GM12878 (cell line): ENCODE measurements at regions of chr1 and their contacts with region 1.

Region 1: DNA sequence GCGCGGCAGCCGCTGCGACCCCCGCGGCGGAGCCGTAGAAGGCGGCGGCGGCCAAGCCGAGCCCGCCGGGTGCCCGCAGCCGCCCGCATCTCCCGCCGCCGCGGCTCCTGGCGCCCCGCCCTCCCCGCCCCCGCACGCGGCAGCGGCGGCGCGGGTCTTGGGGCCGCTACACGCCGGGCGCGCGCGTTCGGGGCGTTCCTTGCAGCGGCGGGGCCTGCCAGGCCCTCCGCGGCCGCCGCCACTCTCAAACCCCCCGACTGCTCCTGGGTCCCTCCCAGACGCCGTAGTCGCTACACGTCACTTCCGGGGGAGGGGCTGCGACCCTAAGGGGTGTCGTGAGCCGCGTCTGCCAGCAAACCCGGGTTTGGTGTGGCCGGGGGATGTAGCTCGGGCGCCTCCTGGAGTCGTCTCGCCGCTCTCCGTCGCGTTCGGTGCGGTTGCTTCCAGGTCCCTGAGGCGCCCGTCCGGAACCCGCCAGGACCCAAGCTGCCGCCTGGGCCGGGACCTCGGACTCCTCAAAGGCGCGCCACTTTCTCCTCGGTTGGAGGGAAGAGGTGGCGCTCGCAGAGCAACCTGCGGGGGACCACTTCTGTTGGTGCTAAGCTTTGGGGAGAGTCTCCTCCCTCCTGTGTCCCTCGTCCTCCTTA is at the start of gene ELK4:
- DNase-seq: peak; percentile 87
- ATAC-seq: peak; percentile 73
- H3K4me3 ChIP-seq: peak within 1 kb of the TSS; percentile 93
- H3K27ac ChIP-seq: peak within 1 kb of the TSS; percentile 74
- H3K4me1 ChIP-seq: peaks cover 13% of the 10 kb centered on the region
- H3K27me3 ChIP-seq: no peaks in the 10 kb centered on the region
- CTCF ChIP-seq: peak; percentile 70 to 98 (median 86); a peak in 5 of 6 replicates
- EP300 ChIP-seq: no peak; a peak in 1 of 4 replicates
- POLR2A ChIP-seq: peak; percentile 93
- RAD21 ChIP-seq: peak; percentile 79
- polyA plus RNA-seq, gene ELK4: 5.2 to 11.9 TPM

Region 2: DNA sequence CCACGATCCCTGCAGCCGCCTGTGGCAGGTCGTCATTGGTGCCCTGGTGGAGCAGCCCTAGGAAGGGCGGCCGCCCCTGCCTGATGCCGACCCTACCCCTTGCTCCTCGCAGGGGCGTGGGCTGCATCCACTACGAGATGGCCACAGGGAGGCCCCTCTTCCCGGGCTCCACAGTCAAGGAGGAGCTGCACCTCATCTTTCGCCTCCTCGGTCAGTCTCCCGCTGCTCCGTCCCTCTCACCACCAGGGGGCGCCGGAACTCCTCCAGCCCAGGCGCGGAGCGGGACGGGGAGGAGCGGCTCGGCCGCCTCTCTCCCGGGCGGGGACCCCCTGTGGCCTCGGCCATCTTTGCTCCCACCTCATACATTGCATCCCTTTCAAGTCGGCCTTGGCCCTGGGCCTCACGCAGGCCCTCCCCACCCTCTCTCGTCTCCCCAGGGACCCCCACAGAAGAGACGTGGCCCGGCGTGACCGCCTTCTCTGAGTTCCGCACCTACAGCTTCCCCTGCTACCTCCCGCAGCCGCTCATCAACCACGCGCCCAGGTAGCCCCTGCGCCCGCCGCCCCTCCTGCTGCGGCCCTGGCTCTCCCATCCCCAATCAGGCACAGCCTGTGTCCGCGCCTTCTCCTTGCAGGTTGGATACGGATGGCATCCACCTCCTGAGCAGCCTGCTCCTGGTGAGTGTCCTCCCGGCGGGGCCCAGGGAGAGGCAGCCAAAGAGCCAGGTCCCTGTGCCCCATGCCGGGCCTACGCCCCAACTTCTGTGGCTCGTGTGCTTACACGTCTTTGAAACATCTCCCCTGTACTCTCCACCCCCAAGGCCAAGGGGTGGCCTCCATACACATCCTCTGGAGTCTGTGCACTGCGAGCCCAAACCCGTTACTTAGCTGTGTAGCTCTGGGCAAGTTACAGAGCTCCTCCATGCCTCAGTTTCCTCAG is 102.7 kb before region 1 on chr1:
- CTCF ChIA-PET with region 1: interaction called, 19 read pairs
- POLR2A ChIA-PET with region 1: no interaction called
- RAD21 ChIA-PET with region 1: interaction called, 18 read pairs
- SMC1A ChIA-PET with region 1: interaction called, 22 read pairs
- in situ Hi-C with region 1: no loop called
- intact Hi-C with region 1: no loop called
- DNase-seq: no peak
- ATAC-seq: peak; percentile 93
- H3K4me3 ChIP-seq: no peak overlapping the region
- H3K27ac ChIP-seq: no peak overlapping the region
- H3K4me1 ChIP-seq: no peaks in the 10 kb centered on the region
- H3K27me3 ChIP-seq: peaks cover 2 to 3% of the 10 kb centered on the region in 2 experiments; a peak in 3 of 4 replicates
- CTCF ChIP-seq: peak; percentile 78 to 96 (median 92)
- EP300 ChIP-seq: no peak
- POLR2A ChIP-seq: no peak
- RAD21 ChIP-seq: peak; percentile 78

Region 3: DNA sequence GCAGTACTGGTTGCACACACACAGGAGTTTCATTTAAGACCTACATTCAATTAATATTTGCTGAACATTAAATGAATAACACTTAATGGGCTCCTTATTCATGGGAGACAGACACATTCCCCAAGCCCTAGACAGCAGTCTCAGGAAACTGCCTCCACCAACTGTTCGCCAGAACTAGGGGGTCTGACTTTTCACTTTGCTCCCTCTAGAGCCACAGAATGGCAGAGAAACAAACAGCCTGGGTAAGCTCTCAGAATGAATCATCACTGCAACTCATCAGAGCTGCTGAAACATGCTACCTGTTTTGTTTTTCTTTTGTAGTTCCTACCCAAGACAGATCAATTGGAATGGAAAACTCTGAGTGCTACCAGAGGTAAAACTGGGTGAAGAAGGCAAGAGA is 31.8 kb before region 1 on chr1:
- CTCF ChIA-PET with region 1: interaction called, 408 read pairs
- POLR2A ChIA-PET with region 1: interaction called, 80 read pairs
- RAD21 ChIA-PET with region 1: interaction called, 381 read pairs
- SMC1A ChIA-PET with region 1: interaction called, 301 read pairs
- in situ Hi-C with region 1: no loop called
- intact Hi-C with region 1: no loop called
- DNase-seq: no peak
- ATAC-seq: peak; percentile 88
- H3K4me3 ChIP-seq: peak overlapping the region; percentile 36; the same call in 1 of the 2 replicates
- H3K27ac ChIP-seq: peak overlapping the region; percentile 54
- H3K4me1 ChIP-seq: peaks cover 34% of the 10 kb centered on the region
- H3K27me3 ChIP-seq: no peaks in the 10 kb centered on the region
- CTCF ChIP-seq: peak; percentile 18 to 29 (median 21); a peak in 4 of 6 replicates
- EP300 ChIP-seq: no peak
- POLR2A ChIP-seq: no peak
- RAD21 ChIP-seq: no peak

Region 4: DNA sequence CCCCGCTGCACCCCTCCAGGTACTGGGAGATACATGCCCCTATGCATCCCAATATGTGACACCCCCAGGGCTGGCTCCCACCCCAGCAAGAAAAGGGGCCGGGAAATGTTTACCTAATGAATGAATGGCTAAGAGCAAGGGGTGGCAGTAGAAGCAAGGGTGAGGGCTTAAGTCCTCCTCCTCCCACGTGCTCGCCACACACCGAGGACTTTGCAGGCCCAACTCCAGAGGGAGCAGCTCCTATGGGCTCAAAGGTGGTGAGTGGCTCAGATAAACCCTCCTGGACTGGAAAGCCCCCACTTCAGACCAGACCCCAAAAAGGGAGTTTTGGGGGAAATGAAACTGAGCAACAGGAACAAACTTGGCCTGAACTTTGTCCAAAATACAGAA is 37.1 kb after region 1 on chr1:
- CTCF ChIA-PET with region 1: interaction called, 5 read pairs
- POLR2A ChIA-PET with region 1: interaction called, 8 read pairs
- RAD21 ChIA-PET with region 1: interaction called, 11 read pairs
- SMC1A ChIA-PET with region 1: interaction called, 17 read pairs
- in situ Hi-C with region 1: no loop called
- intact Hi-C with region 1: no loop called
- DNase-seq: peak; percentile 65
- ATAC-seq: peak; percentile 63
- H3K4me3 ChIP-seq: peak overlapping the region; percentile 51; the same call in 1 of the 2 replicates
- H3K27ac ChIP-seq: peak overlapping the region; percentile 71
- H3K4me1 ChIP-seq: peaks cover 80% of the 10 kb centered on the region
- H3K27me3 ChIP-seq: no peaks in the 10 kb centered on the region
- CTCF ChIP-seq: peak in 2 of 3 experiments; percentile 31 to 48; a peak in 3 of 6 replicates
- EP300 ChIP-seq: peak; percentile 22 to 61; a peak in 2 of 4 replicates
- POLR2A ChIP-seq: no peak
- RAD21 ChIP-seq: peak; percentile 30; the same call in 1 of the 2 replicates

Region 5: DNA sequence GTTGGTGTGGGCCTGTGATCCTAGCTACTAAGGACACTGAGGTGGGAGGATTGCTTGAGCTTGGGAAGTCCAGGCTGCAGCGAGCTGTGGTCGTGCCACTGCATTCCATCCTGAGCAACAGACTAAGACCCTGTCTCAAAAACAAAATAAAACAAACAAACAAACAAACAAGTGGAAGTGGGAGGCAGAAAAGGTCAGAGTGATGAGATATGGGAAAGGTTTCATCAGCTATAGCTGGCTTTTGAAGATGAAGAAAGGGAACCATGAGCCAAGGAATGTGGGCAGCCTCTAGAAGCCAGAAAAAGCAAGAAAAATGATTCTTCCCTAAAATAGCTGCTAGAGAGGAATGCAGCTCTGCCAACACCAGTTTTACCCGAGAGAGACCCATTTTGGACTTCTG is 128.8 kb after region 1 on chr1:
- CTCF ChIA-PET with region 1: no interaction called
- POLR2A ChIA-PET with region 1: no interaction called
- RAD21 ChIA-PET with region 1: no interaction called
- SMC1A ChIA-PET with region 1: no interaction called
- in situ Hi-C with region 1: no loop called
- intact Hi-C with region 1: no loop called
- DNase-seq: no peak
- ATAC-seq: no peak
- H3K4me3 ChIP-seq: no peak overlapping the region
- H3K27ac ChIP-seq: no peak overlapping the region
- H3K4me1 ChIP-seq: peaks cover 4% of the 10 kb centered on the region; the same call in 1 of the 2 replicates
- H3K27me3 ChIP-seq: no peaks in the 10 kb centered on the region; a peak in 1 of 4 replicates
- CTCF ChIP-seq: no peak
- EP300 ChIP-seq: no peak
- POLR2A ChIP-seq: no peak
- RAD21 ChIP-seq: no peak